ENCODE measurements at regions of chr15 and their contacts with region 1.

Region 1: GRCh38 chr15:30073915-30074314 is 8.8 kb upstream of the GOLGA8J start:
- DNase-seq: no peak
- ATAC-seq: no peak
- H3K4me3 ChIP-seq: no peak overlapping the region
- H3K27ac ChIP-seq: no peak overlapping the region
- H3K4me1 ChIP-seq: no peaks in the 10 kb centered on the region
- H3K27me3 ChIP-seq: no peaks in the 10 kb centered on the region

Region 2: GRCh38 chr15:29668120-29668602 is 405.8 kb before region 1 on chr15:
- intact Hi-C with region 1: loop called in 1 of 4 experiments (anchors 10 kb)
- DNase-seq: peak; percentile 62 to 76 (median 71)
- ATAC-seq: peak; percentile 86 to 95
- H3K4me3 ChIP-seq: no peak overlapping the region
- H3K27ac ChIP-seq: no peak overlapping the region
- H3K4me1 ChIP-seq: no peaks in the 10 kb centered on the region
- H3K27me3 ChIP-seq: no peaks in the 10 kb centered on the region

Region 3: DNA sequence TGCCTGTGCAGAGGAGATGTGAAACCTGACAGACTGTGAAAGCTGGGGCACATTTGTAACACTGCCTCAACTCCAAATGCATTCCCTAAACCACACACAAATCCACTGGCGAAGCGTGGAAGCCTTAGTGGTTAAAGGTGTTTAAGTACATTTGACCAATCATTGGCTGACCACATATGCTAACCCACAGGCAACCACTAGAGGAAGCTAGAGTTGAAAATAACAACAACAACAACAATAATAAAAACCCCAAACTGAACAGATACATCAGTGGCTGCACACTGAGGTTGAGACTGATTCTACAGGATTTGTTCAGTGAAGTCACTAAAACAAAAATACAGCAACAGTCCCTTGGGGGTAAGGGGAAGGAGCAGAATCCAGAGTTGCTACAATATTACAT is 381.4 kb before region 1 on chr15:
- intact Hi-C with region 1: no loop called
- DNase-seq: no peak
- ATAC-seq: no peak
- H3K4me3 ChIP-seq: no peak overlapping the region
- H3K27ac ChIP-seq: no peak overlapping the region
- H3K4me1 ChIP-seq: no peaks in the 10 kb centered on the region
- H3K27me3 ChIP-seq: no peaks in the 10 kb centered on the region

Measured in right cardiac atrium (tissue), 5 donors.